Cardiac septum (tissue), 1 donor: ENCODE measurements at regions of chr1 and their contacts with region 1.

Region 1: GRCh38 chr1:159798893-159799292 is 3.3 kb upstream of the FCRL6 start:
- DNase-seq: no peak

Region 2: GRCh38 chr1:159161001-159161718 is 637.7 kb before region 1 on chr1:
- intact Hi-C with region 1: loop called (anchors 10 kb)
- DNase-seq: no peak

Region 3: DNA sequence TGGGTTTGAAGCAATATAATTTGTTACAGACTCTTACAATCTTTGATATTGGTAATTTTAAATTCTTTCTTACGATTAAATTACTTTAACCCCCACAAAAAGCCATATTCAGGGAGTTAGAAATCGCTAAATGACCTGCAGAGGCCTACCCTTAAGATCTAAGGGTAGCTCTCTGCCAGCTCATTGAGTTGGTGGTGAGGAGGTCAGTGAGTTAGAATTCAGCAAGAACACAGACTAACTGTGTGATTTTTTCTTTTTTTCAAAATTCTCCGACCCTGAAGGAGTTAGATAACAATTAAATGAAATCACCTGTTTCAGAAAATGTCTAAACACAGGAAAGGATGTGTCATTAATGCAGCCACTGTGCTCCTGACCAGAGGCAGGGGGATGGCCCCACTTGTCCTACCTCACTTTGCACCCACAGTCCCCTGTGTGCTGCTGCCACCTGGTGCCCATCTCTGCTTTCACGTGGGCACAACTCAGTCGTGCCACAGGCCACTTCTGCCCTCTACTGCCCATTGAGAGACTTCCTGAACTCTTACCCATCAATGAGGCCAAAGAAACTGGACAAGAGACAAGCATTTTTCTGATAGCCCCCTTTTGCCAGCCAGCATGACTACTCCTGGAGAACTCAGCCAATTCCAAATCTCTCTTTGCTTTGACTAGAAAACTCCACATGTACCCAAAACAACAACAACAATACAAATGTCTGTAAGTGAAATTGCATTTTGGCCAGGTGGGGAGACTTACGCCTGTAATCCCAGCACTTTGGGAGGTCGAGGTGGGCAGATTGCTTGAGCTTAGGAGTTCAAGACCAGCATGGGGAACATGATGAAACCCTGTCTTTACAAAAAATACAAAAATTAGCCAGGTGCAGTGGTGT is 92.6 kb after region 1 on chr1:
- intact Hi-C with region 1: loop called (anchors 1 kb)
- DNase-seq: peak; percentile 93

Region 4: DNA sequence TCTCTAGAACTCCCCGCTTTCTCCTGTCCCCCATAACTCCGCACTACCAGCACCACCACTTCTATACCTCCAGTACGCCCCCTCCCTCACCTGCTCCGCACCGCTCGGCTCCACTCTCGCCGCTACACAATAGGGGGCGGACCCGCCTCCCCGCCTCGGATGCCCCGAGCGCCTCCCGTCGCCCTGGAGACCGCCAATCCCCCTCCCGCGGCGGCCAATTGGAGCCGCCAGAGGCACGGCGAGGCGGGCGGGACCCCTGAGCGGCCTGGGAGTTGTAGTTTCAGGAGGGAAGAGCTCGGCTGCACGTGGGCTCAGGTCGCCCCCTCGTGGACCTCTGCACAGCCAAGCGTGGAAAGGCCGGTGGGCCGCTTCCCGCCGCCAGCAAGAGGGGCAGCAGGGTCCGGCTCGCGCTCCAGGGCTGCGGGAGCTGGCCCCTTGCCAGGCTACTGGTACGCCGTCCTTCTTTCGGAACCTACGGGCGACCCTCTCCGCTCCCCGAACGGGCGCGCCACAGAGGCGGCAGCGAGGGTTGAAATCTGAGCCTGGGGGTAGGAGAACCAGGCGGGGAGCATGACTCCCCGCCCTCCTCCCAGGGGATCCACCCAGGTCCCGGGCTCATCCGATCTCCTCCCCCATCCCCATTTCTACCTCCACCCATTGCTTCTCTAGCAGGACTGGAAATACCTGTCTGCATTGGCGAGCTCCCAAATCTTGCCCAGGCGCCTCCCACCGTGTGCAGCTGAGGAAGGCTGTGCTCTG is 146.8 kb after region 1 on chr1 and contains the start of gene IGSF9:
- intact Hi-C with region 1: loop called (anchors 5 kb)
- DNase-seq: peak; percentile 87
- total RNA-seq, gene IGSF9: not detected

Region 5: GRCh38 chr1:160006312-160006940 is 207.5 kb after region 1 on chr1:
- intact Hi-C with region 1: loop called (anchors 5 kb)
- DNase-seq: no peak

Region 6: GRCh38 chr1:160342953-160343869 is 544.3 kb after region 1 on chr1 and contains the starts of genes COPA and NCSTN:
- intact Hi-C with region 1: no loop called
- DNase-seq: peak; percentile 95
- total RNA-seq, gene COPA: 118 TPM
- total RNA-seq, gene NCSTN: 53.7 TPM